GM18951 (cell line): ENCODE measurements at regions of chr5 and their contacts with region 1.

Region 1: GRCh38 chr5:168219515-168220410 is 71.7 kb upstream of the WWC1 start:
- POLR2A ChIP-seq: no peak

Region 2: DNA sequence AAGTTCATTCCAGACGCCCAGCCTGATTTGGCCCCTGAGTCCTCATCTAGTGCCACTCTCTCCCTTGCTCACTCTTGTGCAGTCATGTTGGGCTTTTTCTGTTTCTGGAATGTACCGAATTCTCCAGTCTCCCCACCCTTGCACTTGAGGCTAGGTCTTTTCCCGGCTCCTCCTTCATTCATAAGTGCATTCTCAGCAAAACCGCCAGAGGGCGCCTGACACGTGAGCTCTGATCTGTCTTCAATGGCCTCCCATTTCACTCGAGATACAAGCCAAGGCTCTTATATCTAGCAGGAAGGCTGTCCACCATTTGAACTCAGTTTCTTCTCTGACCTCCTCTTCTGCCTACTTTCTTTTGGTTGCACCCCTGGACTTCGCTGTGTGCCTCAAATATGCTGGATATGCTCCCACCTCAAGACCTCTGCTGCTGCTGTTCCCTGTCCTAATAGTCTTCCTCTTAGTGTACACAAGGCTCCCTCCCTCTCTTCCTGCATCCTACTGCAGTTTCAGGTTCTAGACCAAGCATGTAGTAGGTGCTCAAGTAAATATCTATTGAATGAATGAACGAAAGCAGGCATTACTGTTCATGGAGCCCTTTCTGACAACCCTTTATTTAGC is 496.4 kb before region 1 on chr5:
- in situ Hi-C with region 1: loop called (anchors 10 kb)
- POLR2A ChIP-seq: no peak

Region 3: DNA sequence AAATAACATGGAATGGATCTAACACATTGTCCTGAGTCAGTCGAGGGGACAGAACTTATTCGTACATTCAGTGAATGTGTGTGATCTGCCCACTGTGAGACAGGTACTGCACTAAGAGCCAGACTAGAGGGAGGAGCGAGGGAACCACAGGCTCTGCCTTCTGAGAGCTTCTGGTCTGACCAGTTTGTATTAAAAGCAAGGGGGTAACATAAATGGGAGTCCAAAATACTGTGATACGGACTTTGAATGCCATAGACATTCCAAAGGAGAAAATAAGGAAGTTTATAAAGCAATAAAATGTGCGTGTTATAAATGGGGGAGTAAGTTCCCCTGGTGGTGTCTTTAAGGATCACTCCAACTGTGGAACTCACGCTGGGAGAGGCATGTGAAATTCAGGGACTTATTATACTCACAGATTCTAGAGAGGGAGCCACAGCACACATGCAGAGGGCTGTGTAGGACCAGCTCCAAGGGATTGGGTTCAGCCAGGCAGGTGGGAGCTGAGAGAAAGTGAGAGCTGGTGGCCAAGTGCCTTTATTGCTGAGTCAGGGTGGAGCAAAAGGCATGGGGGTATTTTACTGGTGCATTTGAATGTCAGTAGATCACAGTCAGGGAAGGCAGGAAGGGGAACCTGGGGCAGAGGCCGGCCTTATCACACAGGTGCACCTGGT is 114.8 kb before region 1 on chr5:
- in situ Hi-C with region 1: loop called (anchors 10 kb)
- POLR2A ChIP-seq: no peak

Region 4: GRCh38 chr5:168317521-168318147 is 97.9 kb after region 1 on chr5:
- in situ Hi-C with region 1: no loop called
- POLR2A ChIP-seq: no peak